ENCODE measurements at regions of chr19 and their contacts with region 1.

Region 1: DNA sequence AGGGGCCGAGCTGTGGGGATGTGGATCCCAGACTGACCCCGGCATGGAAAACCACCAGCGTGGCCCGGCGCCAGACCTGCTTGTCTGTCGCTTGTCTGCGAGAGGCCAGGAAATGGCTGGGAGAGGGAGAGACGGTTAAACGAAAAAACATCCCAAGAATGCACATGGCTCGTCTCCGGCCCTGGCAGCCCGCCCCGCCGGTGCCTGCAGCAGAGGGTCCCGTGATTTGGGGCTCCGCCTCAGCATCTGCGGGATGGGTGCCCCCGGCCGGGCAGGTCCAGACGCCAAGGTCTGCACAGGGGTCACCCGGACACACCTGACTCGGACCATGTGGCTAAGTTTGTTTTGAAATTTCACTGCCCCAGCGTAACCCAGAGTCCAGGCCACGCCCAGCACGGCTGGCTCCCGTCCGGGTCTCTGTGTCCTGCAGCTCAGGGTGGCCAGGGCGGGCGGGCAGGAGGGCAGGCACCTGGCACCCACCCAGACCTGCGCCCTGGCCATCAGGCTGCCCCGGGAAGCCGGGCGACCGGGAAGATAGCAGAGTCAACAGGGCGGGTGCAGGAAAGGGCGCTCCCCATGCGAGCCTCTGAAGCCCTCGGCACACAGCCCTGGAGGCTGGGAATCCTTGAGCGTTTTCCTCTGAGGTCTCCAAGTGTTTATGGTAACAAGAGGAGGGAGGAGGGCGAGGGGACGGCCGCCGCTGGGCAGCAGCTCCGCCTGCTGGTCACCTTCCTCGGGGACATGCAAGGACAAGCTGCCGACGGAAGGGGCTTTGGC is 103.2 kb downstream of the GADD45B start:
- DNase-seq: peak; percentile 79
- ATAC-seq: peak; percentile 70
- H3K4me3 Mint-ChIP-seq: peak overlapping the region; percentile 58
- H3K27ac Mint-ChIP-seq: peak overlapping the region; percentile 71
- H3K4me1 Mint-ChIP-seq: peaks cover 4% of the 10 kb centered on the region
- H3K27me3 Mint-ChIP-seq: peaks cover 6% of the 10 kb centered on the region

Region 2: GRCh38 chr19:2610637-2611482 is 31.8 kb after region 1 on chr19:
- POLR2A ChIA-PET with region 1: interaction called, 10 read pairs
- DNase-seq: peak; percentile 94
- ATAC-seq: peak; percentile 75
- H3K4me3 Mint-ChIP-seq: peak overlapping the region; percentile 92
- H3K27ac Mint-ChIP-seq: peak overlapping the region; percentile 45
- H3K4me1 Mint-ChIP-seq: peaks cover 36% of the 10 kb centered on the region
- H3K27me3 Mint-ChIP-seq: peaks cover 9% of the 10 kb centered on the region